ENCODE measurements at regions of chr3 and their contacts with region 1.

Region 1: DNA sequence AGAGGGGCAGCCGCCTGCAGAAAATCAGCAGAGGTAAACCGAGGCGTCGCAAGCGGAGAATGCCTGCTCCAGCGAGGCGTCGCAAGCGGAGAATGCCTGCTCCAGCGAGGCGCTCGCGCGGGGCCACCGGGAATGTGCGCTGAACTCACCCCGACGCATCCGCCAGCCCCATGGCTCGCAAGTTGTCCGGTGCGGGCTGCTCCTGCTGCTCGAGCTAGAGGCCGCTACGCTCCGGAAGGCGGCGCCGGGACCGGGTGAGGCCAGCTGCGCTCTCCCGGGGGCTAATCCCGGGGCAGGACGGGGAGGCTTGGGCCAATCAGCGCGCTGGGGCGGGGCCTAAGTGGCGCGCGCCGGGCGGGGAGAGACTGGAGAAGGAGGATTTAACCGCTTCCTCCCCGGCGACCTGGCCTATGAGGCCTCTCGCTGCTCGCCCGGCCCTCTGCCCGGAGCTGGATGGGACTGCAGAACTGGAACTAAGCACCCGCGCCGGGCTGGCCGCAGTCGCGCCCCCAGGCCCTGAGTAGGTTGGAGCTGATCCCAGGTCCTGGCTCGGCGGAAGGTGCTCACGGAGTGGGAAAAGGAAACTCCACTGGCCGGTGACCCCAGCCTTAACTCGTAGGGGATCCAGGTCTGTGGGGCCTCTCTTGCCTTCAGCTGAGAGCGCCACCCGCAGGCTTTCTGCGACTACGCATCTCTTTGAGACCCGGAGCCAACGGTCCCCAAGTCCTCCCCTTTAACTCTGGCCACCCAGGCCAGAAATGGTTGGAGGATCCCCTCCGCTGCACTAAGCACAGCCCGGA is at the start of gene SLC26A6:
- DNase-seq: peak; percentile 84 to 93 (median 86)
- ATAC-seq: peak; percentile 97 to 98
- H3K4me3 Mint-ChIP-seq: peak within 1 kb of the TSS; percentile 85 to 93 (median 89)
- H3K27ac Mint-ChIP-seq: peak within 1 kb of the TSS; percentile 31 to 84 (median 66)
- H3K4me1 Mint-ChIP-seq: peaks cover 4 to 27% (median 20%) of the 10 kb centered on the region in 4 donors
- H3K27me3 Mint-ChIP-seq: no peaks in the 10 kb centered on the region
- polyA plus RNA-seq, gene SLC26A6: 3.0 to 3.7 (median 3.5) TPM

Region 2: GRCh38 chr3:48581621-48582481 is 53.6 kb before region 1 on chr3:
- POLR2A ChIA-PET with region 1: no interaction called
- DNase-seq: no peak
- ATAC-seq: no peak
- H3K4me3 Mint-ChIP-seq: no peak overlapping the region
- H3K27ac Mint-ChIP-seq: no peak overlapping the region
- H3K4me1 Mint-ChIP-seq: no peaks in the 10 kb centered on the region
- H3K27me3 Mint-ChIP-seq: peaks cover 0 to 6% (median 0%) of the 10 kb centered on the region in 5 donors

Region 3: GRCh38 chr3:48656061-48656840 is 20.8 kb after region 1 on chr3:
- POLR2A ChIA-PET with region 1: interaction called, 10 read pairs
- DNase-seq: peak; percentile 77 to 93 (median 87)
- ATAC-seq: peak; percentile 82 to 87
- H3K4me3 Mint-ChIP-seq: peak overlapping the region; percentile 71 to 89 (median 80)
- H3K27ac Mint-ChIP-seq: peak overlapping the region; percentile 8 to 93 (median 90)
- H3K4me1 Mint-ChIP-seq: peaks cover 1 to 28% (median 13%) of the 10 kb centered on the region in 4 donors
- H3K27me3 Mint-ChIP-seq: peaks cover 0 to 16% (median 3%) of the 10 kb centered on the region in 5 donors